Natural killer cell (primary cell): ENCODE measurements at regions of chr16 and their contacts with region 1.

Region 1: DNA sequence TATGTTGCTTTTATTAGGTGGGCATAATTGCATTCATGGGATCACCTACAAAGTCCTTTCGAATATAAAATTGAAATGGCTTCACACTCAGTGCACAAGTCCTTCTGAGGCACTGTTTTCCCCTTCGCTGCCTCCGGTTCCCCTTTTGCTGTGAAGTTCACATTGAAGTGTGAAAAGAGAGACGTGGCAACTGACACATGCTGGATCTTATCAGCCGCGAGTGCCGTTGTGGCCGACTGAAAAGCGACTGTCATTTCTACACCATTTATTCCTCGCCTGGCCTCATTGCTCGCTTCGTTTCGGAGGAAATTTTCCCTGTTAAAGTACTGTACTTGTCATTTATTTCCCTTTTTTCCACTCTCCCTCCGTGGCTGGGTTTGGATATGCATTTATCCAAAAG is 423.5 kb downstream of the MAF start:
- DNase-seq: peak; percentile 8 to 53
- ATAC-seq: peak; percentile 81 to 98 (median 94)
- H3K4me3 ChIP-seq: no peak overlapping the region
- H3K4me3 Mint-ChIP-seq: peak overlapping the region; percentile 72
- H3K27ac ChIP-seq: peak overlapping the region; percentile 26
- H3K27ac Mint-ChIP-seq: peak overlapping the region; percentile 77 to 85
- H3K4me1 ChIP-seq: peaks cover 17% of the 10 kb centered on the region
- H3K4me1 Mint-ChIP-seq: peaks cover 36 to 45% of the 10 kb centered on the region in 2 donors
- H3K27me3 ChIP-seq: no peaks in the 10 kb centered on the region
- H3K27me3 Mint-ChIP-seq: peaks cover 0 to 11% of the 10 kb centered on the region in 2 donors
- CTCF ChIP-seq: no peak

Region 2: GRCh38 chr16:79089735-79090284 is 87.2 kb before region 1 on chr16:
- intact Hi-C with region 1: loop called (anchors 5 kb)
- DNase-seq: peak; percentile 40 to 70
- ATAC-seq: peak; percentile 42 to 64 (median 53)
- H3K4me3 ChIP-seq: peak overlapping the region; percentile 0
- H3K4me3 Mint-ChIP-seq: peak overlapping the region; percentile 88
- H3K27ac ChIP-seq: peak overlapping the region; percentile 2
- H3K27ac Mint-ChIP-seq: peak overlapping the region; percentile 81 to 87
- H3K4me1 ChIP-seq: peaks cover 60% of the 10 kb centered on the region
- H3K4me1 Mint-ChIP-seq: peaks cover 72 to 85% of the 10 kb centered on the region in 2 donors
- H3K27me3 ChIP-seq: no peaks in the 10 kb centered on the region
- H3K27me3 Mint-ChIP-seq: no peaks in the 10 kb centered on the region
- CTCF ChIP-seq: no peak

Region 3: GRCh38 chr16:79195938-79196337 is 18.9 kb after region 1 on chr16:
- intact Hi-C with region 1: loop called (anchors 2 kb)
- DNase-seq: no peak
- ATAC-seq: peak; percentile 49 to 67 (median 50)
- H3K4me3 ChIP-seq: no peak overlapping the region
- H3K4me3 Mint-ChIP-seq: peak overlapping the region; percentile 62
- H3K27ac ChIP-seq: no peak overlapping the region
- H3K27ac Mint-ChIP-seq: peak overlapping the region; percentile 84 to 87
- H3K4me1 ChIP-seq: peaks cover 28% of the 10 kb centered on the region
- H3K4me1 Mint-ChIP-seq: peaks cover 38 to 48% of the 10 kb centered on the region in 2 donors
- H3K27me3 ChIP-seq: no peaks in the 10 kb centered on the region
- H3K27me3 Mint-ChIP-seq: no peaks in the 10 kb centered on the region
- CTCF ChIP-seq: no peak